ENCODE measurements at regions of chr9 and their contacts with region 1.

Region 1: GRCh38 chr9:136728080-136728547 is 14.6 kb downstream of the LCN10 start:
- DNase-seq: peak; percentile 47 to 90
- H3K4me3 ChIP-seq: peak overlapping the region; percentile 99
- H3K27ac ChIP-seq: peak overlapping the region; percentile 17; the same call in 1 of the 2 replicates
- H3K4me1 ChIP-seq: peaks cover 27% of the 10 kb centered on the region
- H3K27me3 ChIP-seq: no peaks in the 10 kb centered on the region
- CTCF ChIP-seq: peak; percentile 78

Region 2: DNA sequence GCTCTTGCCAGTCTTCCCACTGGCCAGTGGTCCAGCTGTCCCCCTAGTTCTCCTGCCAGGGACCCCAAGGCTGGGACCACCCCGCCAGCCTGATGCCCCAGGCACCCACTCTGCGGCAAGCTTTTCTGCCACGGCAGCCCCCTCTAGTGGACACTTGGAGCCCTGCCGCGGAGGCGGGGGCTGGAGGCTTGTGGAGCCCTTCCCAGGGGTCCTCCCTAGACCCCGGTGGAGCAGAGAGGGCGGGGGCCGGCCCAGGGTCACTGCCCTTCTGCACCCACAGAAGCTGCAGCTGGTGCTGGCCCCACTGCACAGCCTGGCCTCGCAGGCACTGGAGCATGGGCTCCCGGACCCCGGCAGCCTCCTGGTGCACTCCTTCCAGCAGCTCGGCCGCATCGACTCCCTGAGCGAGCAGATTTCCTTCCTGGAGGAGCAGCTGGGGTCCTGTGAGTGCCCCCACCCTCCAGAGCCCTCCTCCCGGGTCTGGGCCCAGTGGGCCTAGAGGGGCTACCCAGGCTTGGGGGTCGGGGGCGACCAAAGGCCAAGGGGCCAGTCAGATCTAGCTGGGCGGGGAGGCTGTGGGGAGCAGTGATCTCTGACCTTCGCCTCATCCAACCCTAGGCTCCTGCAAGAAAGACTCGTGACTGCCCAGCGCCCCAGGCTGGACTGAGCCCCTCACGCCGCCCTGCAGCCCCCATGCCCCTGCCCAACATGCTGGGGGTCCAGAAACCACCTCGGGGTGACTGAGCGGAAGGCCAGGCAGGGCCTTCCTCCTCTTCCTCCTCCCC is 56.3 kb before region 1 on chr9:
- CTCF ChIA-PET with region 1: no interaction called
- POLR2A ChIA-PET with region 1: interaction called, 4 read pairs
- intact Hi-C with region 1: loop called (anchors 10 kb)
- DNase-seq: peak in 1 of 2 experiments; percentile 46
- H3K4me3 ChIP-seq: no peak overlapping the region
- H3K27ac ChIP-seq: no peak overlapping the region
- H3K4me1 ChIP-seq: no peaks in the 10 kb centered on the region
- H3K27me3 ChIP-seq: no peaks in the 10 kb centered on the region
- CTCF ChIP-seq: peak; percentile 87

Region 3: GRCh38 chr9:136694236-136694942 is 33.7 kb before region 1 on chr9:
- CTCF ChIA-PET with region 1: interaction called, 8 read pairs
- POLR2A ChIA-PET with region 1: no interaction called
- intact Hi-C with region 1: loop called (anchors 2 kb)
- DNase-seq: peak in 1 of 2 experiments; percentile 82
- H3K4me3 ChIP-seq: peak overlapping the region; percentile 43; the same call in 1 of the 2 replicates
- H3K27ac ChIP-seq: peak overlapping the region; percentile 94
- H3K4me1 ChIP-seq: peaks cover 47% of the 10 kb centered on the region
- H3K27me3 ChIP-seq: no peaks in the 10 kb centered on the region
- CTCF ChIP-seq: peak; percentile 91

Region 4: GRCh38 chr9:136807281-136808074 is 79.4 kb after region 1 on chr9 and contains the start of gene RABL6:
- CTCF ChIA-PET with region 1: interaction called, 13 read pairs
- POLR2A ChIA-PET with region 1: no interaction called
- intact Hi-C with region 1: no loop called
- DNase-seq: peak in 1 of 2 experiments; percentile 84
- H3K4me3 ChIP-seq: peak within 1 kb of the TSS; percentile 96
- H3K27ac ChIP-seq: 0 out of 2 replicates have a peak within 1 kb of the TSS, but pooled peaks have one; percentile 19
- H3K4me1 ChIP-seq: peaks cover 19% of the 10 kb centered on the region
- H3K27me3 ChIP-seq: no peaks in the 10 kb centered on the region
- CTCF ChIP-seq: no peak
- total RNA-seq, gene RABL6: 116 and 136 TPM in 2 replicates

Region 5: GRCh38 chr9:137086531-137087408 is 358.7 kb after region 1 on chr9 and contains the start of gene MAN1B1:
- CTCF ChIA-PET with region 1: no interaction called
- POLR2A ChIA-PET with region 1: interaction called, 20 read pairs
- intact Hi-C with region 1: no loop called
- DNase-seq: peak; percentile 97 to 100
- H3K4me3 ChIP-seq: peak within 1 kb of the TSS; percentile 88
- H3K27ac ChIP-seq: peak within 1 kb of the TSS; percentile 80
- H3K4me1 ChIP-seq: peaks cover 39% of the 10 kb centered on the region
- H3K27me3 ChIP-seq: no peaks in the 10 kb centered on the region
- CTCF ChIP-seq: no peak
- total RNA-seq, gene MAN1B1: 79.3 and 107 TPM in 2 replicates

Measured in PC-9 (cell line).